Left cardiac atrium (tissue), 4 donors: ENCODE measurements at regions of chr2 and their contacts with region 1.

Region 1: GRCh38 chr2:174341286-174341994 is 6.7 kb downstream of the SP9 start:
- DNase-seq: peak; percentile 85
- ATAC-seq: peak; percentile 86 to 88

Region 2: DNA sequence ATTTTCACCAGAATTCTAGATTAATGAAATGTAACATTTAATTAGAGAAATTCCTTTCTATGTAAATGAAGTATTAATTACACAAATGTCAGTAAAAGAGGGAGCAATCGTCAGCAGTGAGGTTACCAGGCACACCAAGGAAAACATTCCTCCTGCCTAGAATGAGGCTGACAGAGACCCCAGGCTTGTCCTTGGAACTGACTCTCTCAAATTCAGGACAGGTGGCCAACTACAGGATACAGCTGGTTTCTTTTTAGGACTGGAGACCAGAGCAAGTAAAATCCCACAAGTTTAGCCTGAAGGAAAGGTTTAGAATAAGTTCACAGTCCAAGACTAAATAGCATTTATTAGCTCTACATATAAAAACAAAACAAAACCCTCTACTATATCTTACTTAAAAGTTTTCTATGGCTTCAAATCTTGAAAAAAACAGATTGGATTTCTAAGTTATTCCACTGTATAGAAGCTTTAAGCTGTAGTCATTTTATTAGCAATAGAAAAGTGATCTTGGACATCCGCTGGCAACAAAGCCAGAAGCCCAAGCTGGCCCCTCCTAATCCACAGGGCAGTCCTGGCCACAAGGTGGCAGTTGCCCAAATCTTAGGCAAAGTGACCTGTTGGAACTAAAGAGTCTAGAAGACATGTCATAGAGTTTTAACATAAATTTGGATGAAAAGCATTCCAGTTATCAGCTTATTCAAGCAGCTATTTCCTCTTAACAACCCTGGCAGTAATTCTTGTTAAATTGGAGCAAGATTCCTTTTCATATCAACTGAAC is 457.2 kb before region 1 on chr2:
- intact Hi-C with region 1: loop called in 1 of 2 experiments (anchors 10 kb)
- DNase-seq: peak; percentile 65
- ATAC-seq: peak; percentile 66 to 79

Region 3: DNA sequence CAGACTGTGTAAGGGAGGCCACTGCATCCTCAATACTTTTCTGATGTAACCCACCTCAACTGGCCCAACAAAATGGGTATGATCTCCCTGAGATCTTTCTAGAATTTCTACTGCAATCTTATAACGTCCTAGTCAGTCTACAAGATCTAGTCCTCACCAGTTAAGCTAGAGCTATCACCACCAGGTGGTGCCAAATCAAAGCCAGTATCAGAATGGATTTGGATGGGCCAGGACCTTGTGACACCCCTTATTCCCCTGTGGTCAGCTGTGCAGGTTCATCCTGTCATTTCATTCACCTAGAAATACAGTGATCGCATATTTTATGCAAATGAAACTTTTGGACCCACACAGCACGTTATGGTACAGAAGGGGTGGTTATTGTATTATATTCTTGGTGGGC is 183.4 kb before region 1 on chr2:
- intact Hi-C with region 1: loop called in 1 of 2 experiments (anchors 5 kb)
- DNase-seq: no peak
- ATAC-seq: no peak